ENCODE measurements at regions of chr15 and their contacts with region 1.

Region 1: DNA sequence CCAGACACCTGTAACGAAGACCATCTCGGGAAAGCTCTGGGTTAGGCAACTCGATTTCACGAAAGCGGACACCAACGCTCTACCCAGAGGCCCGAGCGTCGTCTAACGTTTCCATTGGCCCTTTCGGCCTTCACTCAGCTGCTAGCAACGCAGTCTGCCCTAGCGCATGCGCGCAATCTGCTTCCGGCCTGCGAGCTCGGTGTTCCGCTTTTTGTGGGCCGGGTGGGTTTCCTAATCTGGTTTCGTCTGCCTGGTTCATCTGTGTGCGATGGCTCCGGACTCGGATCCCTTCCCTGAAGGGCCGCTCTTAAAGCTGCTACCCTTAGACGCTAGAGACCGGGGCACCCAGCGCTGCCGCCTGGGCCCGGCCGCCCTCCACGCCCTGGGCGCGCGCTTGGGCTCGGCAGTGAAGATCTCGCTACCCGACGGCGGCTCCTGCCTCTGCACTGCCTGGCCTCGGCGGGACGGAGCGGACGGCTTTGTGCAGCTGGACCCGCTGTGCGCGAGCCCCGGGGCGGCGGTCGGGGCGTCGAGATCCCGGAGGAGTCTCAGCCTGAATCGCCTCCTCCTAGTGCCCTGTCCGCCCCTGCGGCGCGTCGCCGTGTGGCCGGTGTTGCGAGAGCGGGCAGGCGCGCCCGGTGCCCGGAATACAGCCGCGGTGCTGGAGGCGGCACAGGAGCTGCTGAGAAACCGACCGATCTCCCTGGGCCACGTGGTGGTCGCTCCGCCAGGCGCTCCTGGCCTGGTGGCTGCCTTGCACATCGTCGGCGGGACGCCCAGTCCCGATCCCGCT is 24.0 kb upstream of the GATM start:
- DNase-seq: peak; percentile 94 to 99 (median 96)
- ATAC-seq: peak; percentile 93
- H3K4me3 ChIP-seq: peak overlapping the region; percentile 48 to 75
- H3K4me3 Mint-ChIP-seq: peak overlapping the region; percentile 93
- H3K27ac ChIP-seq: peak overlapping the region; percentile 75 to 86
- H3K27ac Mint-ChIP-seq: peak overlapping the region; percentile 96
- H3K4me1 ChIP-seq: peaks cover 22% of the 10 kb centered on the region
- H3K4me1 Mint-ChIP-seq: peaks cover 42% of the 10 kb centered on the region
- H3K27me3 ChIP-seq: no peaks in the 10 kb centered on the region
- H3K27me3 Mint-ChIP-seq: no peaks in the 10 kb centered on the region
- CTCF ChIP-seq: no peak

Region 2: DNA sequence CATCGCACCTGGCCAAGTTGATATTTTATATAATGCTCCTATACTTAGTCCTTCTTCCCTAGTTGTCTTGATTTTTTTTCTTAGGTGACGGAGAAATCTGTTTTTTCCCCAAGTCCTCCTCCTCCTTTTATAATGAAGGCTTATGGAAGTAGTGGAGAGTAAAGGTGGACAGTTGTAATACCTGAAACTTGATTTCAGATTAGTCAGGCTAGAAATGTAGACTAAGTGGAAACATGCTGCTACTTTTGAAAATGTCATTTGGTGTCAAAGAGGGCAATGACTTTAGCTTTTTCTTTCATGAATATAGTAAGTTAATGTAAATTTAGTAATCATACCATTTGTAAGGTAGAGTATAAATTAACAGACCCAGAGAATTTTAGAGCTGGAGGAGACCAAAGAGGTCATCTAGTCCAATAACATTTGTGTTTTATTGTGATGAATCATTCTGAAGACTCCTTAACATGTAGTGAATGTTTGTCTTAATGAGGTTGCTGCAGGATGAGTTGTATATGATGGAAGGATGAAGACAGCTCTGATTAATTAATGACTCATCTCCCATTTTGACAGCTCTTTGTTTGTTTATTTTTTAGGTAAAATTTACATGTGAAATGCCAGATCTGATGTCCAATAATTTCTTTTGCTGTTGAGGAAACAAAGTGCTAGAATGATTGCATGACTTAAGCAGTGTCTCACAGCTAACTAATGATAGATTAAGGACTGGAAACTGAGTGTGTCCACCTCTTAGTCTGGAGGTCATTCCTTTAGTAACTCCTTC is 966.3 kb before region 1 on chr15:
- CTCF ChIA-PET with region 1: no interaction called
- POLR2A ChIA-PET with region 1: no interaction called
- intact Hi-C with region 1: loop called in 1 of 2 experiments (anchors 10 kb)
- DNase-seq: no peak
- ATAC-seq: no peak
- H3K4me3 ChIP-seq: no peak overlapping the region
- H3K4me3 Mint-ChIP-seq: no peak overlapping the region
- H3K27ac ChIP-seq: no peak overlapping the region
- H3K27ac Mint-ChIP-seq: no peak overlapping the region
- H3K4me1 ChIP-seq: peaks cover 7% of the 10 kb centered on the region
- H3K4me1 Mint-ChIP-seq: peaks cover 54% of the 10 kb centered on the region
- H3K27me3 ChIP-seq: no peaks in the 10 kb centered on the region
- H3K27me3 Mint-ChIP-seq: no peaks in the 10 kb centered on the region
- CTCF ChIP-seq: no peak

Region 3: GRCh38 chr15:45179221-45179985 is 223.0 kb before region 1 on chr15:
- CTCF ChIA-PET with region 1: interaction called, 13 read pairs
- POLR2A ChIA-PET with region 1: no interaction called
- intact Hi-C with region 1: no loop called
- DNase-seq: peak in 8 of 9 experiments; percentile 37 to 71 (median 59)
- ATAC-seq: peak; percentile 67
- H3K4me3 ChIP-seq: no peak overlapping the region
- H3K4me3 Mint-ChIP-seq: no peak overlapping the region
- H3K27ac ChIP-seq: no peak overlapping the region
- H3K27ac Mint-ChIP-seq: no peak overlapping the region
- H3K4me1 ChIP-seq: no peaks in the 10 kb centered on the region
- H3K4me1 Mint-ChIP-seq: peaks cover 15% of the 10 kb centered on the region
- H3K27me3 ChIP-seq: no peaks in the 10 kb centered on the region
- H3K27me3 Mint-ChIP-seq: no peaks in the 10 kb centered on the region
- CTCF ChIP-seq: peak; percentile 46

Region 4: GRCh38 chr15:45279024-45279698 is 123.2 kb before region 1 on chr15:
- CTCF ChIA-PET with region 1: interaction called, 6 read pairs
- POLR2A ChIA-PET with region 1: interaction called, 5 read pairs
- intact Hi-C with region 1: loop called (anchors 1 kb)
- DNase-seq: peak; percentile 95 to 99 (median 97)
- ATAC-seq: peak; percentile 99
- H3K4me3 ChIP-seq: peak overlapping the region; percentile 61 to 69
- H3K4me3 Mint-ChIP-seq: peak overlapping the region; percentile 91
- H3K27ac ChIP-seq: peak overlapping the region; percentile 66 to 85
- H3K27ac Mint-ChIP-seq: peak overlapping the region; percentile 94
- H3K4me1 ChIP-seq: peaks cover 15% of the 10 kb centered on the region
- H3K4me1 Mint-ChIP-seq: peaks cover 22% of the 10 kb centered on the region
- H3K27me3 ChIP-seq: no peaks in the 10 kb centered on the region
- H3K27me3 Mint-ChIP-seq: peaks cover 1% of the 10 kb centered on the region
- CTCF ChIP-seq: no peak

Region 5: GRCh38 chr15:45384700-45385099 is 17.7 kb before region 1 on chr15:
- CTCF ChIA-PET with region 1: interaction called, 15 read pairs
- POLR2A ChIA-PET with region 1: interaction called, 8 read pairs
- intact Hi-C with region 1: no loop called
- DNase-seq: no peak
- ATAC-seq: no peak
- H3K4me3 ChIP-seq: no peak overlapping the region
- H3K4me3 Mint-ChIP-seq: no peak overlapping the region
- H3K27ac ChIP-seq: no peak overlapping the region
- H3K27ac Mint-ChIP-seq: no peak overlapping the region
- H3K4me1 ChIP-seq: no peaks in the 10 kb centered on the region
- H3K4me1 Mint-ChIP-seq: no peaks in the 10 kb centered on the region
- H3K27me3 ChIP-seq: peaks cover 0 to 1% of the 10 kb centered on the region in 2 experiments
- H3K27me3 Mint-ChIP-seq: peaks cover 8% of the 10 kb centered on the region
- CTCF ChIP-seq: no peak

Region 6: DNA sequence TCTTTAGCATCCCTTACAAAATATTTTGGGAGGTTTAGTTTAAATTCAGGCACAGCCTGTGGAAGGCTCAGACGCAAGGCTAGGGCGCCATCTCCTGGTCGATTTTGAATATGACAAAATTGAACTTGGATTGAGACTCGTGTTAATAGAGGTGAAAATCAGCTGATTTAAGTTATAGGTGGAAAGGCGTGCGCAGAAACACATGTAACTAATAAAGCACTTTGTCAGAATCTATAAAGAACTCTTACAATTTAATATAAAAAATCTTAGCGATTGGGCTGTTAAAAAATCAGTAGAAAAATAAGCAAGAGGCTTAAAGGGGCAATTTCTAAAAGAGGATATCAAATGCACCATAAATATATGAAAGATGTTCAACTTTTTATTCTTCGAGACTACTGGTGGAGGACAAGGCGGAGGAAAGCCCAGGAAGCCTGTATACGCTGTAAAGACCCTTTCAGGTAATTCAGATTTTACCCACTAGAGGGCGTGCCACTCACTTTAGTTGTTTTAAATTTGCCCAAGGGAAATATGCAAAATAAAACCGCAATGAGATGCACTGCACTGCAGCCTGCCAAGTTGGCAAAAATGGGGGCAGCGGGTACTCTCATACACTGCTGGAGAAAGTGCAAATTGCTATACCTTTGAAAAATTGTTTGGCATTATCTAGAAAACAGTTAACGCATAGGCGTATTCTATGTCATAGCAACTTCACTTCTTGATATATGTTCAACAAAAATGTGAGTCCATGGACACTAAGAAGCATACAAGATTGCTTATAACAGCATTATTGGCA is 55.5 kb after region 1 on chr15:
- CTCF ChIA-PET with region 1: interaction called, 13 read pairs
- POLR2A ChIA-PET with region 1: interaction called, 3 read pairs
- intact Hi-C with region 1: loop called (anchors 1 to 2 kb)
- DNase-seq: peak; percentile 43 to 90 (median 79)
- ATAC-seq: peak; percentile 65
- H3K4me3 ChIP-seq: peak overlapping the region; percentile 53 to 57
- H3K4me3 Mint-ChIP-seq: peak overlapping the region; percentile 84
- H3K27ac ChIP-seq: peak overlapping the region; percentile 24 to 61
- H3K27ac Mint-ChIP-seq: peak overlapping the region; percentile 87
- H3K4me1 ChIP-seq: peaks cover 24% of the 10 kb centered on the region
- H3K4me1 Mint-ChIP-seq: peaks cover 42% of the 10 kb centered on the region
- H3K27me3 ChIP-seq: no peaks in the 10 kb centered on the region
- H3K27me3 Mint-ChIP-seq: no peaks in the 10 kb centered on the region
- CTCF ChIP-seq: peak; percentile 93

Region 7: DNA sequence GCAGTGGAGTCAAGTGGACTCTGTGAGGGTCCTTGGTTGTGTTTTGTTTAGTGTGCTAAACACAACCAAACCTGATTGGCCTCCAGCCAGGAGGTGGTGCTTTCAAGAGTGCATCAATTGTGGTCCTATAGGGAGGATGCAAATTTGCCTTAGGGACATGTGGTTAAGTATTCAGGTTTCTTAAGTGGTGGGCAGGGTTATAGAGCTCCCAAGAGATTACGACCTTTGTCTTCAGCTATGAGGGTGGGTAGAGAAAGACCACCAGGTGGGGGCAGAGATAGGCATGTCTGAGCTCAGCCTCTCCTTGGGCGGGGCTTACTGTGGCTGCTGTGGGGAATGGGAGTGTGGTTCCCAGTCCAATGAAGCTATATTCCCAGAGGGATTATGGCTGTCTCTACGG is 419.0 kb after region 1 on chr15:
- CTCF ChIA-PET with region 1: no interaction called
- POLR2A ChIA-PET with region 1: no interaction called
- intact Hi-C with region 1: no loop called
- DNase-seq: no peak
- ATAC-seq: no peak
- H3K4me3 ChIP-seq: no peak overlapping the region
- H3K4me3 Mint-ChIP-seq: no peak overlapping the region
- H3K27ac ChIP-seq: no peak overlapping the region
- H3K27ac Mint-ChIP-seq: no peak overlapping the region
- H3K4me1 ChIP-seq: no peaks in the 10 kb centered on the region
- H3K4me1 Mint-ChIP-seq: no peaks in the 10 kb centered on the region
- H3K27me3 ChIP-seq: no peaks in the 10 kb centered on the region
- H3K27me3 Mint-ChIP-seq: peaks cover 17% of the 10 kb centered on the region
- CTCF ChIP-seq: no peak

Measured in CD8-positive, alpha-beta T cell (primary cell).